A673 (cell line): ENCODE measurements at regions of chr5 and their contacts with region 1.

Region 1: DNA sequence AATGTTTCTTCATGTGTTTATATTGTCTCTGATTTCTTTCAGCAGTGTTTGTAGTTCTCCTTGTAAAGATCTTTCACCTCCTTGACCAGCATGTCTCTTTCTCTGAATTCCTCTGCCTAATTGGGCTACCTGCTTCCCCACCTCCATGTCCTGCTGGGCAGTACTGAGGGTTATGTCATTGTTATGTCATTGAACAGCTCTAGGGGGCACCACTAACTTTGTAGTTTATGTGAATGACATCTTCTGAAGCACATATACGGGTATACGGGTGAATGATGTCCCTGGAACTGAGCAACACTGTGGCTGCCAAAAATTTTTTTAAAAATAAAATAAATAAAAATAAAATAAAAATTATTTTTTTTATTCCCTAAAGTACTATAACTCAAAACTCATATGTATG is 16.9 kb upstream of the SNCAIP start:
- DNase-seq: peak; percentile 25
- H3K4me3 ChIP-seq: no peak overlapping the region
- H3K27ac ChIP-seq: no peak overlapping the region
- H3K4me1 ChIP-seq: no peaks in the 10 kb centered on the region
- H3K27me3 ChIP-seq: peaks cover 14% of the 10 kb centered on the region
- CTCF ChIP-seq: peak; percentile 49

Region 2: DNA sequence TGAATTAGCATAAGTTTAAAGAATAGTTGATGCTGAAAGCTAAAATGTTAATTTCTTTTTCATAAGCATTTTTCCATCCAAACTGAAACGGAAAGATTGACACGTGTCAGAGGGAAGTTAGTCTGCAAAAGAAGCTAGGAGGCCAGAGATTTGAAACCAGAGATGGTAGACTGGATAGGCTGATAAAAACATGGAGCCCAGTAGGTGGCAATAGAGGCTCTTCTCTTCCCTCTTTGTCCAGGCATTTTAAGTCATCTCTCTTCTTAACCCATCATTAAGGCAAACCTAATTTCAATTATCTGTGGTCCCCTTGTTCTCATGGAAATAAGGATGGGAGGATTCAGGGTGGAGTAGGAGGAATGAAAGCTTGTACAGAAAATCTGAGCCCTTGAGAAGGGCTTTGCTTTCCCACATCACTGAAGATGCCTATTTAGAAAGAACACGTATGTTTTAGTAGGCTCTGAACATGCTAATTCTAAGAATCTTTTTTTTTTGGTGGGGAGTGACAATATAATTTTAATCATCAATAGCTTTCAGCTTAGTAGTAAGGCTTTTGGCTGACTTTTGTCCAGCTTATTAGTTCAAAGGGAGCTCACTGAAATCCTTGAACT is 99.2 kb before region 1 on chr5:
- CTCF ChIA-PET with region 1: no interaction called
- POLR2A ChIA-PET with region 1: no interaction called
- intact Hi-C with region 1: no loop called
- DNase-seq: peak; percentile 57
- H3K4me3 ChIP-seq: no peak overlapping the region
- H3K27ac ChIP-seq: no peak overlapping the region
- H3K4me1 ChIP-seq: no peaks in the 10 kb centered on the region
- H3K27me3 ChIP-seq: peaks cover 33% of the 10 kb centered on the region
- CTCF ChIP-seq: peak; percentile 66

Region 3: GRCh38 chr5:122322801-122323548 is 27.8 kb after region 1 on chr5:
- CTCF ChIA-PET with region 1: interaction called, 4 read pairs
- POLR2A ChIA-PET with region 1: interaction called, 21 read pairs
- intact Hi-C with region 1: no loop called
- DNase-seq: no peak
- H3K4me3 ChIP-seq: no peak overlapping the region
- H3K27ac ChIP-seq: no peak overlapping the region
- H3K4me1 ChIP-seq: no peaks in the 10 kb centered on the region
- H3K27me3 ChIP-seq: peaks cover 80% of the 10 kb centered on the region
- CTCF ChIP-seq: no peak